CD14-positive monocyte (primary cell): ENCODE measurements at regions of chr7 and their contacts with region 1.

Region 1: GRCh38 chr7:75866489-75867389 is 12.1 kb upstream of the RHBDD2 start:
- DNase-seq: peak; percentile 62 to 79 (median 78)
- H3K4me3 ChIP-seq: no peak overlapping the region
- H3K4me3 Mint-ChIP-seq: peak overlapping the region in 1 of 2 donors; percentile 48
- H3K27ac ChIP-seq: no peak overlapping the region
- H3K27ac Mint-ChIP-seq: peak overlapping the region in 4 of 7 donors; percentile 41 to 81 (median 67)
- H3K4me1 ChIP-seq: peaks cover 29% of the 10 kb centered on the region in 2 donors
- H3K4me1 Mint-ChIP-seq: peaks cover 48% of the 10 kb centered on the region
- H3K27me3 ChIP-seq: no peaks in the 10 kb centered on the region
- H3K27me3 Mint-ChIP-seq: peaks cover 6 to 10% (median 6%) of the 10 kb centered on the region in 3 donors
- CTCF ChIP-seq: peak; percentile 92

Region 2: DNA sequence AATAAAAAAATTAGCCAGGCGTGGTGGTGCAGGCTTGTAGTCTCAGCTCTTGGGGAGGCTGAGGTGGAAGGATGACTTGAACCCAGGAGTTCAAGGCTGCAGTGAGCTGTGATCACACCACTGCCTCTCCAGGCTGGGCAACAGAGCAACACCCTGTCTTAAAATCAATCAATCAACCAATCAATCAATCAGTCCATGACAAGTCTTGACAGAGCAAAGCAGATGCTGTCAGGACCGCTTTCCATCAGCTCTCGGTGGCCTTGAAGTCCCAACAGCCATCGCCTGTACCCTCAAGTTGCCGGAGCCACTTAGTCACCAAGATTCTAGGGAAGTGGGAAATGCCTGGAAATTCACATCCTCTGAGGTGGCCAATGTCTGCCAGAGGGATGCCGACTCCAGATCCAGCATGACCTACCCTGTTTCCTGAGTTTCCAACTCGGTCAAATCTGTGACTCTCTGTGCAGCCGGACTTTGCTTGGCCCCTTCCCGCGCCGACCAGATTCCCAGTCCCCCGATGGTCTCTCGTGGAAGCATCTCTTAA is 52.3 kb before region 1 on chr7:
- intact Hi-C with region 1: loop called in 1 of 2 experiments (anchors 10 kb)
- DNase-seq: no peak
- H3K4me3 ChIP-seq: no peak overlapping the region
- H3K4me3 Mint-ChIP-seq: peak overlapping the region in 1 of 2 donors; percentile 42
- H3K27ac ChIP-seq: no peak overlapping the region
- H3K27ac Mint-ChIP-seq: peak overlapping the region in 1 of 7 donors; percentile 64
- H3K4me1 ChIP-seq: peaks cover 32 to 45% of the 10 kb centered on the region in 2 donors
- H3K4me1 Mint-ChIP-seq: peaks cover 32% of the 10 kb centered on the region
- H3K27me3 ChIP-seq: peaks cover 0 to 7% of the 10 kb centered on the region in 2 donors
- H3K27me3 Mint-ChIP-seq: peaks cover 15 to 23% (median 19%) of the 10 kb centered on the region in 3 donors
- CTCF ChIP-seq: no peak

Region 3: GRCh38 chr7:75899091-75899490 is 32.4 kb after region 1 on chr7:
- intact Hi-C with region 1: no loop called
- DNase-seq: no peak
- H3K4me3 ChIP-seq: no peak overlapping the region
- H3K4me3 Mint-ChIP-seq: no peak overlapping the region
- H3K27ac ChIP-seq: no peak overlapping the region
- H3K27ac Mint-ChIP-seq: no peak overlapping the region
- H3K4me1 ChIP-seq: no peaks in the 10 kb centered on the region
- H3K4me1 Mint-ChIP-seq: peaks cover under 1% of the 10 kb centered on the region
- H3K27me3 ChIP-seq: no peaks in the 10 kb centered on the region
- H3K27me3 Mint-ChIP-seq: peaks cover 0 to 1% (median 1%) of the 10 kb centered on the region in 3 donors
- CTCF ChIP-seq: no peak